ENCODE measurements at regions of chr4 and their contacts with region 1.

Region 1: GRCh38 chr4:102620697-102621497 is 119.7 kb downstream of the NFKB1 start:
- DNase-seq: peak in 1 of 3 donors; percentile 66
- ATAC-seq: peak; percentile 85 to 94
- H3K4me3 ChIP-seq: no peak overlapping the region
- H3K27ac ChIP-seq: no peak overlapping the region
- H3K4me1 ChIP-seq: peaks cover 2% of the 10 kb centered on the region
- H3K27me3 ChIP-seq: no peaks in the 10 kb centered on the region

Region 2: GRCh38 chr4:102564399-102565059 is 56.4 kb before region 1 on chr4:
- intact Hi-C with region 1: no loop called
- DNase-seq: no peak
- ATAC-seq: no peak
- H3K4me3 ChIP-seq: no peak overlapping the region
- H3K27ac ChIP-seq: no peak overlapping the region
- H3K4me1 ChIP-seq: peaks cover 11% of the 10 kb centered on the region
- H3K27me3 ChIP-seq: no peaks in the 10 kb centered on the region

Region 3: GRCh38 chr4:102780476-102781144 is 159.7 kb after region 1 on chr4:
- intact Hi-C with region 1: no loop called
- DNase-seq: no peak
- ATAC-seq: no peak
- H3K4me3 ChIP-seq: no peak overlapping the region
- H3K27ac ChIP-seq: no peak overlapping the region
- H3K4me1 ChIP-seq: no peaks in the 10 kb centered on the region
- H3K27me3 ChIP-seq: no peaks in the 10 kb centered on the region

Region 4: DNA sequence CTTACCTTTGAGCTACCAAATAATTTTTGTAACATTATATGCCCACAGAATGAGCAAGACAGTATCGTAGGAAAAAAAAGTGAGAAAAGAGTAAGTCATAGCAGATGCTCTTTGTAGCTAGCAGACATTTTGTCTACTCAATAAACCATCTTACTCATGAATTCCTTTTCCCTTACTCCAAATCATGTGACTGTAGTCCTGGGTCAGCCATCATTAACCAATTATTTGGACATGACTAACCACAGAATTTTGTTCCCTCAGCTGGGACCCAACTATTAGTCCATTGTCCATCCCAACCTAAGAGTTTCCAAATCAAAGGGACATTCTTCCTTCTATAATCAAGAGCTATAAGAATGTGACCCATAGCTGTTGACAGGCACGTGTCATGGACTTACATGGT is 195.1 kb after region 1 on chr4:
- intact Hi-C with region 1: loop called in 1 of 4 experiments (anchors 10 kb)
- DNase-seq: no peak
- ATAC-seq: no peak
- H3K4me3 ChIP-seq: no peak overlapping the region
- H3K27ac ChIP-seq: no peak overlapping the region
- H3K4me1 ChIP-seq: peaks cover 6% of the 10 kb centered on the region
- H3K27me3 ChIP-seq: no peaks in the 10 kb centered on the region

Region 5: DNA sequence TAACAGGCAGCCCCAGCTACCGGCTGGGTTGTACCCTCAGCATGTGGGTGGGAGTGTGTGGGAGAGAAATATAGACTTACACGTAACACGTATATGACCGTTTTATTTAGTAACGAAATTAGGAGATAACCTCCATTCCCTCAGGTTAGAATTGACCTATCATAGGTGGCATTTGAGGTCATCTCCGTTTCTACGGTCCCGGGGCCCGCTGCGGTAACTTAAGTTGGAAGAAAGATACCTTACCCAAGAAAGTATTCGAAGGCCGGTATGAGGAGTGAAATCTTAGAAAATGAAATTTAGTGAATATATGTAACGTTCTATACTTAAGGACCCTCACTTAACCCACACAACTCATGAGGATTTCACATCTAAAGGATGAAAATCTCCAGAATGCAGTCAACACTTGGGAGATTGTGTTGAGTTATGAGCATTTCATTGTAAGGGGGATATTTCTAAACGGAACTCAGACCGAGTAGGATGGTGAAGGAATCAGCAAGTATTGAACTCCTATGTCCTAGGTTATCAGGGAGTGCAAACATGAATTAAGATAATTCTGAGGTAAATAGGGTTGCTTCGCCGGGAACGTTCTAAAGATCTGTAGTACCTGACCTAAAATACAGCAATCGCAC is 248.8 kb after region 1 on chr4:
- intact Hi-C with region 1: no loop called
- DNase-seq: no peak
- ATAC-seq: no peak
- H3K4me3 ChIP-seq: peak overlapping the region; percentile 68
- H3K27ac ChIP-seq: peak overlapping the region; percentile 95
- H3K4me1 ChIP-seq: no peaks in the 10 kb centered on the region
- H3K27me3 ChIP-seq: no peaks in the 10 kb centered on the region

Region 6: DNA sequence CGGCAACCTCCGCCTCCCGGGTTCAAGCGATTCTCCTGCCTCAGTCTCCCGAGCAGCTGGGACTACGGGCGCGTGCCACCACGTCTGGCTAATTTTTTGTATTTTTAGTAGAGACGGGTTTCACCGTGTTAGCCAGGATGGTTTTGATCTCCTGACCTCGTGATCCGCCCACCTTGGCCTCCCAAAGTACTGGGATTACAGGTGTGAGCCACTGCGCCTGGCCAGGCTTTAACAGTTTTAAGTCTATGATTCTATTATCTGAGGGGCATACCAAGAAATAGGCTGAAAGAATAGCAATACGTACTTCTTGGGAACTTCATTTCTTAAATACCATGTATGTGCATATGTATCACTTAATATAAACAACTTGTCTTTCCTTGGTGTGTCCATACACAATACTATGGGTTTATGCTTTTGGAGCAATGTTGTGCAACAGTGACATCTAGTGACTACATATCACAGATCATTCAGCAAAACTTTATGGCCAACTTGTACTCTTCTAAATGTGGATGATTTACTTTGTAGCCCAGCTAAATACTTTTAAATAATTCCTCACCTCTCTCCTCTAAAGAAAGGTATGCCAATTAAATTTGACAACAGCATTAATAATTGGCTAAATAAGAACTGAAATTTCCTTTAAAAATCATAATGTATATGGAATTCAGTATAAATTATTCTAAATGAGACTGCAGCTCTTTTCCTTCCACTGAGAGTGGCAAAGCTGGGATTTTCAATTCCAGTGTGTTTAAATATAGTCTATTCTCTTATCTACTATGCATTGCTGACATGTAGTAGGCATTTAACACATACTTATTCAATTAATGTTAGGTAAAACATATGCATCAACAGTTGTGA is 388.2 kb after region 1 on chr4:
- intact Hi-C with region 1: loop called (anchors 2 to 5 kb)
- DNase-seq: peak in 1 of 3 donors; percentile 38
- ATAC-seq: peak; percentile 81 to 85
- H3K4me3 ChIP-seq: no peak overlapping the region
- H3K27ac ChIP-seq: no peak overlapping the region
- H3K4me1 ChIP-seq: peaks cover 3% of the 10 kb centered on the region
- H3K27me3 ChIP-seq: no peaks in the 10 kb centered on the region

Region 7: DNA sequence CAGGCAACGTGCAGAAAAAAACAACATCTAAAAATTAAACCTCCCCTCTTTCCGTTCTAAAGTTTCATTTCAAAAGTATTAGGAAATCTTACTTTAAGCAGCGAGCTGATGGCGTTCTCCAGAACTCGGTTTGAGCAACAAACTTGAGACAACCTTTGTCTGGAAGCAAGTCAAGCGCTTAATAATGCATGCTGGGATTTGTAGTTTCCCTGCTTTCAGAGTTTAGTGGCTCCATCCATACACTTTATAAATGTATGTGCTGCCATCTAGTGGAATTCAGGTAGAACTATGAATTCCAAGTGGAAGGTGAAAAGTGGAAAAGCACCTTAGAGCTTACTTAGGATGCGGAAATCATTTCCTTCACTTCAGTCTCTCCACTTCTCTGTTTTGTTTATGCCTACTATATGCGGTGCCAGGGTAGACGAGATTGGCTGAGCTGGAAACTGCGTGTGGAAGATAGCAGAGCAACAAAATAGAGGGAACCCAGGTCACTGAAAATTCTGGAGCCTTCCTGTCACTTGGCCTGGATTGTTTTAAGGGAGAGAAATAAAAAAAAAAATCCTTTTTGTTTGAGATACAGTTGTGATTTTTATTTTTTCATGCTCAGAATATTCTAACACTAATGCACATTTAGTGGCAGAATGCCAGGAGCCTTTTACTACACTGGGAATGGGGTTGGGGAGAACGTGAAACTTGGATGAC is 478.9 kb after region 1 on chr4 and contains the start of gene BDH2:
- intact Hi-C with region 1: loop called in 3 of 4 experiments (anchors 5 to 10 kb)
- DNase-seq: peak in 2 of 3 donors; percentile 34 to 44
- ATAC-seq: peak; percentile 96 to 97
- H3K4me3 ChIP-seq: peak within 1 kb of the TSS; percentile 97
- H3K27ac ChIP-seq: peak within 1 kb of the TSS; percentile 25
- H3K4me1 ChIP-seq: peaks cover 6% of the 10 kb centered on the region
- H3K27me3 ChIP-seq: no peaks in the 10 kb centered on the region
- total RNA-seq, gene BDH2: 33.1 to 49.5 (median 43.9) TPM

Measured in right cardiac atrium (tissue), 5 donors.